ENCODE measurements at regions of chr1 and their contacts with region 1.

Region 1: DNA sequence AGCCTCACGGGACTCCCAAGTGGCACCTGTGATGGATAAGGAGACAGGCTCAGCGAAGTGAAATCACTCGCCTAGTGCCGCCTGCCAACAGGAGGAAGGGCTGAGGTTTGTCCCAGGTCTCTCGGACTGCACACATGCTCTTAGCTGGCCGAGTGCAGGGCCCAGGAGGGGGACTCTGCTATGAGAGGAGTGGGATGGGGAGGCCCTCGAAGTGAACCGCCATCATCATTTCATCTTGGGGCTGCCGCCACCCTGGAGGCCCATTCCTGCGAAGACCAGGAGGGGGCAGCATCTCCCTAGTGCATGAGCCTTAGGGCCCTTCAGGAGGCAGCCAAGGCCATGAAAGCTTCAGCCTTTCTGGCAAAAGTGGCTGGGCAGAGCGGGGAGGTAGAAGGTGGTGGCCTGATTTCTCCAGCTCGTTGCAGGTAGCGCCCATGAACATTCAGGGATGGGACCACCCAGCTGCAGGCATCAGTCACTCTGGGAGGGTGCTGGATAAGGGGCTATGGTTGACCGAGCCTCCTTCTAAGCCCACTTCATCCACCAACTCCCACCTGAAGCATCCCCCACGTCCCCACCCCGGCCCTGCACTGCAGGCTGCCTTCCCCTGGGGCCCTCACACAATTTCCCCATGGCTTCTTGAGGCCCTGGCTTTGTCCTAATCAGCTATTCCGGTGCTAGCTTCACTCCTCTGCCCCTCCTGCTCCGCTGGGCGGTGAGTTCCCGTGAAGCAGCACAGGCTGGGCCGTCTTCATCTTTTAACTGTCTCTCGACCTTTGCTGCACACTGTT is 17.2 kb upstream of the RASSF5 start:
- DNase-seq: peak; percentile 68
- H3K4me3 ChIP-seq: no peak overlapping the region
- H3K27ac ChIP-seq: peak overlapping the region; percentile 72
- H3K27me3 ChIP-seq: no peaks in the 10 kb centered on the region
- CTCF ChIP-seq: peak; percentile 99

Region 2: GRCh38 chr1:206583707-206584648 is 93.8 kb after region 1 on chr1:
- in situ Hi-C with region 1: loop called (anchors 25 kb)
- DNase-seq: peak; percentile 68
- H3K4me3 ChIP-seq: no peak overlapping the region
- H3K27ac ChIP-seq: no peak overlapping the region
- H3K27me3 ChIP-seq: no peaks in the 10 kb centered on the region
- CTCF ChIP-seq: peak; percentile 97